ENCODE measurements at regions of chr10 and their contacts with region 1.

Region 1: GRCh38 chr10:64508029-64508661 is 986.9 kb downstream of the REEP3 start:
- DNase-seq: no peak
- H3K4me3 ChIP-seq: no peak overlapping the region
- H3K27ac ChIP-seq: no peak overlapping the region
- H3K4me1 ChIP-seq: no peaks in the 10 kb centered on the region
- H3K27me3 ChIP-seq: no peaks in the 10 kb centered on the region
- CTCF ChIP-seq: no peak

Region 2: GRCh38 chr10:64449603-64450002 is 58.5 kb before region 1 on chr10:
- CTCF ChIA-PET with region 1: no interaction called
- dilution Hi-C with region 1: loop called (anchors 5 kb)
- in situ Hi-C with region 1: no loop called
- intact Hi-C with region 1: no loop called
- DNase-seq: no peak
- H3K4me3 ChIP-seq: no peak overlapping the region
- H3K27ac ChIP-seq: no peak overlapping the region
- H3K4me1 ChIP-seq: no peaks in the 10 kb centered on the region
- H3K27me3 ChIP-seq: no peaks in the 10 kb centered on the region
- CTCF ChIP-seq: no peak

Measured in mammary epithelial cell (primary cell).